Right cardiac atrium (tissue), 5 donors: ENCODE measurements at regions of chr17 and their contacts with region 1.

Region 1: DNA sequence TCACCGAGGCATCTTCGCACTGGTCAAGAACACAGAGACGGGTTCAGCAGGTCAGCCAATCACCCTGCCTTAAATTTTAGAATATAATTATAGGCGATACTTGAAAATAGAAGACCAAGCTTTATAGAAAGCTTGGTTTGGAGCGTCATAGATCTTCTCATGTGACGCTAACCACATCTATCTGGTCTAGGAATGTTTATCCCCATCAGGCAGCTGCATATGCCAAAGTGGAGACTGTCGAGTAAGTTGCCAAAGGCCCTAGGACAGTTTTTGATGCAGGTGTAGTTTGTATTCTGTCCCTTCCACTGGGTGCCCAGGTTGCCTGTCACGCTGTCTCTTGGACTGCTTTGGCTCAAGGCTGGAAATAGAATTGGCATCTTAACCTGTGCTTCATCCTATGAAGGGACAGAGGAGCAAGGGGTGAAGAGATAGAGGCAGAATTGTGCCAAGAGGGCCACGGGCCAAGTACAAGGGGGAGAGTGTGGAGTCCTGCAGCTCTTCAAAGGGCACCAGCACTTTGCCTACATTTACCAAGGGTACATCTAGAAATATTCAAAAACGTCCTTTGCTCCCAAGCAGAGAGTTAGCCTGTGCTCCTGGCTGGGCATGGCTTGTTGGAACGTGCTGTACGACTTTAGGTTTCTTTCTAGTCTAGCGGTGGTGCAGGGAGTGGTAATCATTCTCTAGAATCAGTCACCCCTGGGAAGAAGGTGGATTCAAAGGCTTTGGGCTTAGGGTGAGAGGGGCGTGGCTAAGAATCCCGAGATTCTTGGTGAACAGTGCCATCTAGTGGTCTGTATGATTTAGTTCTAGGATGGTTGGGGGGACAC is 5.3 kb upstream of the WIPI1 start:
- DNase-seq: peak; percentile 57 to 85 (median 78)
- ATAC-seq: peak; percentile 81 to 87
- H3K4me3 ChIP-seq: no peak overlapping the region
- H3K27ac ChIP-seq: peak overlapping the region; percentile 83
- H3K4me1 ChIP-seq: no peaks in the 10 kb centered on the region
- H3K27me3 ChIP-seq: no peaks in the 10 kb centered on the region

Region 2: GRCh38 chr17:68101075-68101992 is 361.3 kb before region 1 on chr17:
- intact Hi-C with region 1: no loop called
- DNase-seq: peak; percentile 96 to 99 (median 96)
- ATAC-seq: peak; percentile 99 to 100
- H3K4me3 ChIP-seq: peak overlapping the region; percentile 75
- H3K27ac ChIP-seq: peak overlapping the region; percentile 74
- H3K4me1 ChIP-seq: no peaks in the 10 kb centered on the region
- H3K27me3 ChIP-seq: no peaks in the 10 kb centered on the region

Region 3: GRCh38 chr17:68172461-68172954 is 290.1 kb before region 1 on chr17:
- intact Hi-C with region 1: loop called in 3 of 4 experiments (anchors 5 to 10 kb)
- DNase-seq: peak; percentile 63 to 87 (median 83)
- ATAC-seq: peak; percentile 65 to 70
- H3K4me3 ChIP-seq: no peak overlapping the region
- H3K27ac ChIP-seq: no peak overlapping the region
- H3K4me1 ChIP-seq: no peaks in the 10 kb centered on the region
- H3K27me3 ChIP-seq: no peaks in the 10 kb centered on the region

Region 4: DNA sequence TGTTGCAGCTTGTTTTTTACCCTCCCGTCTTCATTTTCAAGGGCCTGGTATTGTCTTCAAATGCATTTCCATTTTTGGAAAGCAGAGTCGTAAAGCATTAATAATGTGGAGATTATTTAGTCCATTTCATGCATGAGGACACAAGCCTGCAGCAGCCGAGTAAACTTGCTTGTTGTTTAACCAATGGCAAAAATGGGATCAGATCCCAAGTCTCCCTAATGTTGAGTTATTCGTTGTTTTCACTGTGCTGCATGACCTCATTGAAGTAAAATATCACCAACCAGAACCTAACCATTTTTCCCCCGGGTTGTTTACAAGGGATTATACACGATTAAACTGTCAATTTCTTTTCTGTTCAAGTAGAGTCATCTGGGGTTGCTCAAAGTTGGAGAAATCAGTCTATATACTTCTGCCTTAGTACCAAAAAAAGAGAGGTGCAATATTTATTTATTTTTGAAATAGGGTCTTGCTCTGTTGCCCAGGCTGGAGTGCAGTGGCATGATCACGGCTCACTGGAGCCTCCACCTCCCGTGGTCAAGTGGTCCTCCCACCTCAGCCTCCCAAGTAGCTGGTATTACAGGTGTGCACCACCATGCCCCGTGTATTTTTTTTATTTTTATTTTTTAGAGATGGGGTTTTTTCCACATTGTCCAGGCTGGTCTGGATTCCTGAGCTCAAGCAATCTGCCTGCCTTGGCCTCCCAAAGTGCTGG is 202.4 kb before region 1 on chr17:
- intact Hi-C with region 1: loop called in 3 of 4 experiments (anchors 5 to 10 kb)
- DNase-seq: no peak
- ATAC-seq: no peak
- H3K4me3 ChIP-seq: no peak overlapping the region
- H3K27ac ChIP-seq: no peak overlapping the region
- H3K4me1 ChIP-seq: peaks cover 4% of the 10 kb centered on the region
- H3K27me3 ChIP-seq: no peaks in the 10 kb centered on the region

Region 5: DNA sequence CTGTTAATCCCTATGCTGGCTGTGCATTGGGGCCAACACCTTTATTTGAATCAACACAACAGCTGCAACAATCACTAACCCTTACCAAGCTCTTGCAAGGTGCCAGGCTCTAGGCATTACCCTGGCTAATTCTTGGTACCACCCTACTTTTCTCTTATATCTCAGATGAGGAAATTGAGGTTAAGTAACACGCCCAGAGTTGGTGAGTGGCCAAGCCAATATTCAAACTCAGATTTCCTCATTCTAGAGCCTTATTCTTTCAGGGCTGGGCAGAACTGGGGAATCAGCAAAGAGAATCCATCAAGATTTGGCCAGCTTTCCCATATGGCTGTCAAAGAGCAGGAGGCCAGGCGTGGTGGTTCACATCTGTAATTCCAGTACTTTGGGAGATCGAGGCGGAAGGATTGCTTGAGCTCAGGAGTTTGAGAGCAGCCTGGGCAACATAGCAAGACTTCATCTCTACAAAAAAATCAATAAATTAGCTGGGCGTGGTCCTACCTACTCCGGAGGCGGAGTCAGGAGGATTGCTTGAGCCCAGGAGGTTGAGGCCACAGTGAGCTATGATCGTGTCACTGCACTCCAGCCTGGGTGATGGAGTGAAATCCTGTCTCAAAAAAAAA is 147.6 kb before region 1 on chr17:
- intact Hi-C with region 1: no loop called
- DNase-seq: peak in 1 of 3 donors; percentile 70
- ATAC-seq: peak in 1 of 2 donors; percentile 22
- H3K4me3 ChIP-seq: no peak overlapping the region
- H3K27ac ChIP-seq: no peak overlapping the region
- H3K4me1 ChIP-seq: peaks cover 3% of the 10 kb centered on the region
- H3K27me3 ChIP-seq: no peaks in the 10 kb centered on the region

Region 6: GRCh38 chr17:68512247-68512982 is 49.8 kb after region 1 on chr17 and contains the start of gene PRKAR1A:
- intact Hi-C with region 1: loop called in 1 of 4 experiments (anchors 10 kb)
- DNase-seq: peak; percentile 95 to 98 (median 97)
- ATAC-seq: peak; percentile 94 to 96
- H3K4me3 ChIP-seq: peak within 1 kb of the TSS; percentile 68
- H3K27ac ChIP-seq: peak within 1 kb of the TSS; percentile 98
- H3K4me1 ChIP-seq: no peaks in the 10 kb centered on the region
- H3K27me3 ChIP-seq: no peaks in the 10 kb centered on the region
- total RNA-seq, gene PRKAR1A: 545 to 768 (median 595) TPM

Region 7: DNA sequence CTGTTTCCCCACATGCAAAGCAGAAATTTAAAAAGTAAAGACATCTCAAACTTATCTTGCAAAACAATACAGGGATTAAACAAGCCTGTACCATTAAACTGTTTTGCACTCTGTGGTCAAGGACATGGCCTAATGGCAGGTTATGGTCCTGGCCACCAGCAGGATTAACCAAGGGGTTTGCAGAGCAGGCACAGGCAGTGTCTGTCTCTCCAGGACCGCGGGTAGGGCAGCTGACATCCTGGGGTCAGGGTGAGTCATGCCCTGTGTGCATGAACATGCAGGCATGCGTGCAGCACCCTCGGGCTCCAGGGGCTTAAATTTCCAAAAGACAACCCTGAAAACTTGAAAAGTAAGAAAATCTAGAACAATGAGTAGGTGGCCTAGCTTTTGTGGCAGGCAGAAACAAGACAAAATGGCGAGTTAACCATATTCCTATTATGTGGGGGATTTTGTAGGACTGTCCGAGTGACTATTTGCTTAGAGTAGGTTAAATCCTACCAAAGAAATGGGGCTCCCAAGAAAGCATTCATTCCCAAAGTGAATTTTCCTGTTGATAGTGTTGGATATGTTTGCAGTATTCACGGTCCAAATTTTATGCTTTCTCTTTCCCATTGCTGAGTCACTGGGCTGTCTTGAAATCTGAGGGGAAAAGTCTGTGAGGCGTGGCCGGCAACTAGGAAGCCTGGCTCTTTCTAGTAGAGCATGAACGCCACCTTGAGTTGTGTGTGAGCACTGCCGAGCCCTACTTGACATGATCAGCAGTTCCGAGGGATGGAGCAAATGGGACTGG is 296.9 kb after region 1 on chr17:
- intact Hi-C with region 1: loop called in 1 of 4 experiments (anchors 10 kb)
- DNase-seq: peak; percentile 88 to 96 (median 92)
- ATAC-seq: peak; percentile 98
- H3K4me3 ChIP-seq: peak overlapping the region; percentile 39
- H3K27ac ChIP-seq: peak overlapping the region; percentile 6
- H3K4me1 ChIP-seq: peaks cover 2% of the 10 kb centered on the region
- H3K27me3 ChIP-seq: no peaks in the 10 kb centered on the region